ENCODE measurements at regions of chr10 and their contacts with region 1.

Region 1: DNA sequence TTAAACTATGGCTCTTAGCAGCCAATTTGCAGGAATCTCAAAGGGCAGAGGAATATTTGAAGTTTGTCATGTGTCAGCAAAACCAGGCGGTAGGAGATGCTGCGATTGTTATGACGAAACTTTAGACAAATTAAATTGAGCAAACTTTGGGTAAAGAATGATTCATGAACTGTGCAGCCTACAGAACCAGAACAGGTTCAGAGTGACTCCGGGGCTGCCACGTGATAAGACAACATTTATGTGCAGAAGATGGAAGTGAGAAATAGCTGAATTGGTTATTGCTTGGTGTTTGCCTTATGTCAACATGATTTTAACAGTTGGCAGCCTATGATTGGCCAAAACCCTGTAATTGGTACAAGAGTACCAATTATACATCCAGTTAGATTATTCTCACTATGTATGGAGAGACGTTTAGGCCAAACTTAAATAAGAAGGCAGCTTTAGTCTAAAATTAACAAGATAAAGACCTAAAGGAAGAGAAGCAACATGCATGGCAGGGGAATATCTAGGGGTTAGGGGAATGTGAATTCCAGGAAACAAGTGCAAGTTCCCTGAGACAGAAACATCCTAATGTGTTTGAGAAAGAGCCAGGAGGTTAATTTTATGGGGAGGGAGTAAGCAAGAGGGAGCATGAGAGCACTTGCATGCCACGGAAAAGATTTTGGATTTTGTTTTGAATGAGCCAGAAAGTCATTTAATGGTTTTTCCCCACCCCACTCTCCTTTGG is 39.5 kb upstream of the CCDC6 start:
- DNase-seq: no peak
- H3K4me3 ChIP-seq: no peak overlapping the region
- H3K27ac ChIP-seq: no peak overlapping the region
- H3K27me3 ChIP-seq: no peaks in the 10 kb centered on the region
- CTCF ChIP-seq: no peak

Region 2: DNA sequence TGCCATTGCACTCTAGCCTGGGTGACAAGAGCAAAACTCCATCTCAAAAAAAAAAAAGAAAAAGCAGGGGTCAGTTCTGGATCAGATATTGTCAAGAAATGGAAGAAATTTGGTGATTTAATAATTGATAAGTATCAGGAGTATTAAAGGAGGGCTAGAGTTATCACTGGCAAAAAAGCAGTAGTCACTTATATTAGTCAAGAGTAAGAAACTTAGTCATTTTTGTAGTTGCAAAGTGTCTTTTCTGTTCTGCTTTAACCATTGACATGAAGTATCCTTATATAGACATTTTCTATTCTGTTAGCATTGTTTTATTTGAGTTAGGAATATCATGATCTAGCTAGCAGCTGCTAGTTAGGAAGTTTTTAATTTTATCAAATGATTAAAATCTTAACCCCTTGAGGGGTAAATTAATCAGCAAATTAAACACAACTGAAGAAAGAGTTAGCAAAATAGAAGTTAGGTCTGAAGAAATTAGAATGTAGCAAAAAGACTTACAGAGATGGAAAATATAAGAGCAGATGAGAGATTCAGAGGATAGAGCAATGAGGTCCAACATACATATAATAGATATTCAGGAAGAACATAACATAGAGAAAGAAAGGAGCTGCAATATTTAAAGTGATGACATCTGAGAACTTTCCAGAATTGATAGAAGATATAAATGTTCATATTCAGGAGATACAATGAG is 32.1 kb before region 1 on chr10:
- CTCF ChIA-PET with region 1: no interaction called
- POLR2A ChIA-PET with region 1: no interaction called
- DNase-seq: no peak
- H3K4me3 ChIP-seq: no peak overlapping the region
- H3K27ac ChIP-seq: no peak overlapping the region
- H3K27me3 ChIP-seq: no peaks in the 10 kb centered on the region
- CTCF ChIP-seq: no peak

Region 3: DNA sequence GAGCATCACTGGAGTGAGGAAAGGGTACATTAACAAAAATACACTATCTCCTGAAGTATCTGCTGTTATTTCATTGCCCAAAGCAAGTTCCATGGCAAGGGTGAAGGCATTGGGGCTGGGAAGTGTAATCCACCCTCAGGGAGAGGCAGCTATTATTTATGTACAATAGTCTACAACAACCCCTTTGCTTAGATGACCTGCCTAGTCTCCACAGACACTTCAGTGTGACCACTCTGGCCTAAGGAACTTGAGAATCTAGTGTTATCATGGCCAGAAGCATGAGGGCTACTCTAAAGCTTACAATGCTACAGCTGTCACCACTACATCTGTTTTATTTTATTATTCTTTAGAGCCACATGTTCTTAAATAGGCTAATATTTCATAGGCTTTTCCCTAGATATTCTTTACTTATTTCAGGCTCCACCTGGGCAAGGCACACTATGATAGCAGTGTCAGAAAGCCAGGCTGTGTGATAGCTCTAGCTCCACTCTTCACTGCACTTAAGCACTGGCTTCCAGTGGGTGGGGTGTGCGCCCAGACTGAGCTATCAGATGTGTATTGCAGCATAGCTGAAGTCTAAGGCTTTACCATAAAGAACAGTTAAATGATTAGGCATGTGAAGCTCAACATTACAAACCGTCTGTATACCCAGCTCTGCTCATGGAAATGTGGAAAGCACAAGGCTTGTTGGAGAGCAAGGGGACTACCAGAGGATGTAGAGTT is 77.5 kb after region 1 on chr10:
- CTCF ChIA-PET with region 1: no interaction called
- POLR2A ChIA-PET with region 1: interaction called, 10 read pairs
- DNase-seq: no peak
- H3K4me3 ChIP-seq: no peak overlapping the region
- H3K27ac ChIP-seq: no peak overlapping the region
- H3K27me3 ChIP-seq: peaks cover 2% of the 10 kb centered on the region
- CTCF ChIP-seq: no peak

Measured in AG04450 (cell line).